ENCODE measurements at regions of chr1 and their contacts with region 1.

Region 1: DNA sequence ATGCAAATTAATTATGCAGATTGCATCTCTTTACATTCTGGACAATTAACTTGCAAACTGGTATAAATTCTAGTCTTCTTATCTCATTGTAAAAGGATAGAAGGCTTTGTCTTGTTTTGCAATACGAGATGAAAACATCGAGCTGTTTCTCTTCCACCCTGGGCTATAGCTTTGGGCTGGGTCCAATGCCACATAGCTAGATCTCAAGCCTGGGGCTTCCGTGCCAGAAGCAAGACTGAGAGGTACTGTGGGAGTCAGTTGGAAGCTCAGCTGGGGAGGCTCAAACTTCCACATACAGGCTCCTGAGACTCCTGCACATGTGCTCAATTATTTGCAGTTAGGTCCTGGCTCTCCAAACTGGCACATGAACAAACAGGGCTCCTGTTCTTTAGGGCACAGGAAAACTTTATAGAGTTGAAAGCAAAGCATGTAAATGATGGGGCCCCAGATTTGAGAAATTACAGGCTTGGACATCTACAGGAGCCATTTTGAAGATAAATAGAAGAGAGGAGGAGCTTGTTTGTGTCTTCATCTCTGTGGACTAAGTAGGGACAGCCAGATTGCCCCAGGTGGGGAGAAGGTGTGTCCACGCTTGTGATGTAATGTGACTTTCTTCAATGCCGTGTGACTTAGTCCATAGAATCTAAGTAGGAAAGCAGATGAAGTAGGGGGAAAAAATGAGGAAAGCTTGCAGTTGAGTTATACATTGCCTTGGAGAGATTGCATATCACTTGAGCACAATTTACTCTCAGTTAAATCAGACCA is 65.9 kb upstream of the SIPA1L2 start:
- DNase-seq: no peak
- H3K4me3 Mint-ChIP-seq: no peak overlapping the region
- H3K27ac Mint-ChIP-seq: no peak overlapping the region
- H3K4me1 Mint-ChIP-seq: peaks cover 6% of the 10 kb centered on the region
- H3K27me3 Mint-ChIP-seq: peaks cover 22% of the 10 kb centered on the region
- CTCF ChIP-seq: no peak

Region 2: GRCh38 chr1:232684363-232685105 is 11.3 kb before region 1 on chr1:
- CTCF ChIA-PET with region 1: interaction called, 5 read pairs
- POLR2A ChIA-PET with region 1: interaction called, 11 read pairs
- intact Hi-C with region 1: no loop called
- DNase-seq: peak; percentile 59
- H3K4me3 Mint-ChIP-seq: no peak overlapping the region
- H3K27ac Mint-ChIP-seq: no peak overlapping the region
- H3K4me1 Mint-ChIP-seq: peaks cover 9% of the 10 kb centered on the region
- H3K27me3 Mint-ChIP-seq: no peaks in the 10 kb centered on the region
- CTCF ChIP-seq: no peak